ENCODE measurements at regions of chr12 and their contacts with region 1.

Region 1: GRCh38 chr12:98593351-98594049 is at the start of gene SLC25A3:
- DNase-seq: peak; percentile 96
- ATAC-seq: peak; percentile 96
- H3K4me3 ChIP-seq: peak within 1 kb of the TSS; percentile 99 to 100
- H3K27ac ChIP-seq: peak within 1 kb of the TSS; percentile 91
- H3K4me1 ChIP-seq: peaks cover 15 to 26% of the 10 kb centered on the region in 2 experiments
- H3K27me3 ChIP-seq: no peaks in the 10 kb centered on the region
- CTCF ChIP-seq: no peak
- POLR2A ChIP-seq: peak; percentile 97
- RAD21 ChIP-seq: no peak
- total RNA-seq, gene SLC25A3: 927 TPM

Region 2: DNA sequence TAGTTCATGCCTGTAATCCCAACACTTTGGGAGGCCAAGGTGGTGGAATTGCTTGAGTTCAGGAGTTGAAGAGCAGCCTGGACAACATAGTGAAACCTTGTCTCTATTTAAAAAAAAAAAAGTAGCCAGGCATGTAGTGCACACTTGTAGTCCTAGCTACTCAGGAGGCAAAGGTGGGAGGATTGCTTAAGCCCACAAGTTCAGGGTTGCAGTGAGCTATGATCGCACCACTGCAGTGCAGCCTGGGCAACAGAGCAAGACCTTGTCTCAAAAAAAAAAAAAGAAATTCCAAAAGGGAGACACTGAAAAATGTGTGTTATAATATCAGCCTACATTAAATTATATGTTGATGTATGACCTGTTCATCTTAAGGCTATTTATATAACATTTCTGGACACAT is 63.4 kb before region 1 on chr12:
- CTCF ChIA-PET with region 1: no interaction called
- POLR2A ChIA-PET with region 1: no interaction called
- RAD21 ChIA-PET with region 1: no interaction called
- intact Hi-C with region 1: no loop called
- DNase-seq: no peak
- ATAC-seq: no peak
- H3K4me3 ChIP-seq: no peak overlapping the region
- H3K27ac ChIP-seq: no peak overlapping the region
- H3K4me1 ChIP-seq: no peaks in the 10 kb centered on the region
- H3K27me3 ChIP-seq: no peaks in the 10 kb centered on the region
- CTCF ChIP-seq: no peak
- POLR2A ChIP-seq: no peak
- RAD21 ChIP-seq: no peak

Region 3: GRCh38 chr12:98572010-98572409 is 21.5 kb before region 1 on chr12:
- CTCF ChIA-PET with region 1: interaction called, 18 read pairs
- POLR2A ChIA-PET with region 1: interaction called, 5 read pairs
- RAD21 ChIA-PET with region 1: interaction called in 1 of 2 experiments, 3 read pairs
- intact Hi-C with region 1: no loop called
- DNase-seq: no peak
- ATAC-seq: peak; percentile 88
- H3K4me3 ChIP-seq: no peak overlapping the region
- H3K27ac ChIP-seq: no peak overlapping the region
- H3K4me1 ChIP-seq: peaks cover 7 to 11% of the 10 kb centered on the region in 2 experiments; a peak in 3 of 4 replicates
- H3K27me3 ChIP-seq: no peaks in the 10 kb centered on the region
- CTCF ChIP-seq: peak; percentile 14 to 72 (median 69); a peak in 5 of 6 replicates
- POLR2A ChIP-seq: no peak
- RAD21 ChIP-seq: no peak

Region 4: GRCh38 chr12:98644711-98645402 is 51.4 kb after region 1 on chr12 and contains the starts of genes APAF1 and IKBIP:
- CTCF ChIA-PET with region 1: no interaction called
- POLR2A ChIA-PET with region 1: interaction called, 5 read pairs
- RAD21 ChIA-PET with region 1: interaction called in 1 of 2 experiments, 4 read pairs
- intact Hi-C with region 1: loop called (anchors 2 kb)
- DNase-seq: peak; percentile 86
- ATAC-seq: peak; percentile 89
- H3K4me3 ChIP-seq: peak within 1 kb of the TSS; percentile 68 to 91
- H3K27ac ChIP-seq: peak within 1 kb of the TSS; percentile 88
- H3K4me1 ChIP-seq: peaks cover 2 to 17% of the 10 kb centered on the region in 2 experiments; a peak in 3 of 4 replicates
- H3K27me3 ChIP-seq: no peaks in the 10 kb centered on the region
- CTCF ChIP-seq: no peak
- POLR2A ChIP-seq: peak; percentile 66
- RAD21 ChIP-seq: no peak
- total RNA-seq, gene APAF1: 13.9 TPM
- total RNA-seq, gene IKBIP: 14.5 TPM